Caco-2 (cell line): ENCODE measurements at regions of chr10 and their contacts with region 1.

Region 1: GRCh38 chr10:81179805-81180452 is 642.2 kb downstream of the SH2D4B start:
- DNase-seq: peak in 1 of 2 experiments; percentile 37
- H3K4me3 ChIP-seq: no peak overlapping the region
- H3K4me3 Mint-ChIP-seq: no peak overlapping the region
- H3K27ac Mint-ChIP-seq: no peak overlapping the region
- H3K4me1 ChIP-seq: no peaks in the 10 kb centered on the region
- H3K4me1 Mint-ChIP-seq: no peaks in the 10 kb centered on the region
- H3K27me3 ChIP-seq: no peaks in the 10 kb centered on the region
- H3K27me3 Mint-ChIP-seq: no peaks in the 10 kb centered on the region
- CTCF ChIP-seq: peak; percentile 46 to 56

Region 2: GRCh38 chr10:81031774-81032173 is 148.2 kb before region 1 on chr10:
- CTCF ChIA-PET with region 1: no interaction called
- POLR2A ChIA-PET with region 1: no interaction called
- intact Hi-C with region 1: no loop called
- DNase-seq: no peak
- H3K4me3 ChIP-seq: no peak overlapping the region
- H3K4me3 Mint-ChIP-seq: no peak overlapping the region
- H3K27ac Mint-ChIP-seq: no peak overlapping the region
- H3K4me1 ChIP-seq: no peaks in the 10 kb centered on the region
- H3K4me1 Mint-ChIP-seq: no peaks in the 10 kb centered on the region
- H3K27me3 ChIP-seq: no peaks in the 10 kb centered on the region
- H3K27me3 Mint-ChIP-seq: peaks cover 5% of the 10 kb centered on the region
- CTCF ChIP-seq: no peak

Region 3: DNA sequence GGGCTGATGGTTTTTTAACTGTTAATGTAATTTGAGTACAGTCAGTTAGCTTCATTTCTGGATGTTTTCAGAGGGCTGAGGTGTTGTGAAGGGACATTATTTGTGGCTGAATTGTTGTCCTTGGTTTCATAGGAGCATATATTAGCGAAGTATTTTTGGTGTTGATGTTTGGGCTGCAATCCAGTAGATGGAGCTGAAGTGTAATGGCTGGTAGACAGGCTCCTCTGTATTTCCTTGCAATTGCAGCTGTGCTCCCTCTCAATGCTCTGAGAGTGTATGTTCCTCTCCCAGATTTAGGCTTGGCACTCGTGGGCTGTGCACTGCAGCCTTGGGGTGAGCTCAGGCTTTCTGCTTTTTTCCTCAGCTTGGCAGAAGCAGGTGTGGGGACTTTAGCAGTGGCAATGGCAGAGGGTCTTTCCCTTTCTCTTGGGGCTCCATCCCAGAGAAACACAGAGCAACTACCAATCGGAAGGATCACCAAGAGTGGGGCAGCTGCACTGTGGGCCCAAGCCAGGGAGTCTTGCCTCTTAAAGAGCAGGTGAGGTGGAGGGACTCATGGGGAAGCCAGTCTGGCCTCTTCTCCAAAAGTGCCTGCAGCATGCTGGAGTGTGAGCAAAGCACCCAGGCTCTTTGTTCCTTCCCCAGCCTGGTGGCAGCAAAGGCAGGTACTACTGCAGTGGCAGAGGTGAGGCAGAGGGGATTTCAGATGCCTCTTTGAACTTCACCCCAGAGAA is 97.9 kb before region 1 on chr10:
- CTCF ChIA-PET with region 1: interaction called, 5 read pairs
- POLR2A ChIA-PET with region 1: no interaction called
- intact Hi-C with region 1: loop called (anchors 1 kb)
- DNase-seq: no peak
- H3K4me3 ChIP-seq: no peak overlapping the region
- H3K4me3 Mint-ChIP-seq: no peak overlapping the region
- H3K27ac Mint-ChIP-seq: no peak overlapping the region
- H3K4me1 ChIP-seq: no peaks in the 10 kb centered on the region
- H3K4me1 Mint-ChIP-seq: no peaks in the 10 kb centered on the region
- H3K27me3 ChIP-seq: no peaks in the 10 kb centered on the region
- H3K27me3 Mint-ChIP-seq: no peaks in the 10 kb centered on the region
- CTCF ChIP-seq: peak in 1 of 2 experiments; percentile 13